ENCODE measurements at regions of chr5 and their contacts with region 1.

Region 1: GRCh38 chr5:80591352-80591751 is 21.3 kb upstream of the ANKRD34B start:
- DNase-seq: no peak
- H3K4me3 ChIP-seq: no peak overlapping the region
- H3K4me3 Mint-ChIP-seq: no peak overlapping the region
- H3K27ac Mint-ChIP-seq: no peak overlapping the region
- H3K4me1 ChIP-seq: no peaks in the 10 kb centered on the region
- H3K4me1 Mint-ChIP-seq: peaks cover 11% of the 10 kb centered on the region
- H3K27me3 ChIP-seq: no peaks in the 10 kb centered on the region
- H3K27me3 Mint-ChIP-seq: no peaks in the 10 kb centered on the region
- CTCF ChIP-seq: no peak

Region 2: DNA sequence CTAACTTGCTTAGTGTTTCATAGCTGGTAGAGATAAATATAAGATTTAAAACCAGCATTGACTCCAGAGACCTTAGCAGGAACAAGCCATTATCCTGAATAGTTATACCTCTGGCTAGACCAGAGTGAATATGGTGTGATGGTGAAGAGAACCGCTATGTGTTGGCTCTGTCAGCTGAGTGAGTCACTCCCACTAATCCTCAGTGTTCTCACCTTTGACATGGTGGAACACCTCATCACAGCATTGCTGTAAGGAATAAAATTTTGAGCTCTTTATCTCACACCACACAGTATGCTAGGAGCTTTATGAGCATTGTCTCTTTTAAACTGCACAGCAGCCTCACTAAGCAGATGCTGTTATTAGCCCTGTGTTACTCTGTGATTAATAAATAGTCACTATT is 154.1 kb after region 1 on chr5:
- CTCF ChIA-PET with region 1: no interaction called
- POLR2A ChIA-PET with region 1: no interaction called
- intact Hi-C with region 1: no loop called
- DNase-seq: no peak
- H3K4me3 ChIP-seq: no peak overlapping the region
- H3K4me3 Mint-ChIP-seq: no peak overlapping the region
- H3K27ac Mint-ChIP-seq: no peak overlapping the region
- H3K4me1 ChIP-seq: peaks cover 19% of the 10 kb centered on the region
- H3K4me1 Mint-ChIP-seq: peaks cover 8% of the 10 kb centered on the region
- H3K27me3 ChIP-seq: no peaks in the 10 kb centered on the region
- H3K27me3 Mint-ChIP-seq: no peaks in the 10 kb centered on the region
- CTCF ChIP-seq: no peak

Region 3: GRCh38 chr5:80761176-80761575 is 169.8 kb after region 1 on chr5:
- CTCF ChIA-PET with region 1: no interaction called
- POLR2A ChIA-PET with region 1: no interaction called
- intact Hi-C with region 1: loop called (anchors 10 kb)
- DNase-seq: peak; percentile 25 to 51
- H3K4me3 ChIP-seq: no peak overlapping the region
- H3K4me3 Mint-ChIP-seq: no peak overlapping the region
- H3K27ac Mint-ChIP-seq: no peak overlapping the region
- H3K4me1 ChIP-seq: no peaks in the 10 kb centered on the region; the same call in 1 of the 2 replicates
- H3K4me1 Mint-ChIP-seq: peaks cover 10% of the 10 kb centered on the region
- H3K27me3 ChIP-seq: no peaks in the 10 kb centered on the region
- H3K27me3 Mint-ChIP-seq: no peaks in the 10 kb centered on the region
- CTCF ChIP-seq: no peak

Measured in Caco-2 (cell line).